ENCODE measurements at regions of chr7 and their contacts with region 1.

Region 1: DNA sequence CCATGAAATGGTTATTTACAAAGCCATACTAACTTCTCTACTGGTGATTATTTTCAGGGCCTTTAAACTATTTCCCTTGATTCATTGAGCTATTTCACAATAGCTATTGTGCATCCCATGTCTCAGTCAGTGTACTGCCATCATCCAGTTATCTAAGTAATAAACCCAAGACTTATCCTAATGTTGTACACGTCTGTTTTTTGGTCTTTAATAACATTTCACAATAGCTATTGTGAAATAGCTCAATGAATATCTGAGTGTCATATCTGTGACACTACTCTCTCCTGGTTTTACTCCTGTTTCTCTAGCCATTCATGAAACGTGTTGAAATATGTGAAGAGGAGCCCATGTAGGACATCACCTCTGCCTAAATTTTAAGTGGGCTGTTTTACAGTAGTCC is 36.5 kb upstream of the TMEM140 start:
- DNase-seq: no peak
- ATAC-seq: no peak

Region 2: GRCh38 chr7:135012229-135012628 is 99.2 kb before region 1 on chr7:
- intact Hi-C with region 1: loop called (anchors 10 kb)
- DNase-seq: no peak
- ATAC-seq: no peak